ENCODE measurements at regions of chr5 and their contacts with region 1.

Region 1: DNA sequence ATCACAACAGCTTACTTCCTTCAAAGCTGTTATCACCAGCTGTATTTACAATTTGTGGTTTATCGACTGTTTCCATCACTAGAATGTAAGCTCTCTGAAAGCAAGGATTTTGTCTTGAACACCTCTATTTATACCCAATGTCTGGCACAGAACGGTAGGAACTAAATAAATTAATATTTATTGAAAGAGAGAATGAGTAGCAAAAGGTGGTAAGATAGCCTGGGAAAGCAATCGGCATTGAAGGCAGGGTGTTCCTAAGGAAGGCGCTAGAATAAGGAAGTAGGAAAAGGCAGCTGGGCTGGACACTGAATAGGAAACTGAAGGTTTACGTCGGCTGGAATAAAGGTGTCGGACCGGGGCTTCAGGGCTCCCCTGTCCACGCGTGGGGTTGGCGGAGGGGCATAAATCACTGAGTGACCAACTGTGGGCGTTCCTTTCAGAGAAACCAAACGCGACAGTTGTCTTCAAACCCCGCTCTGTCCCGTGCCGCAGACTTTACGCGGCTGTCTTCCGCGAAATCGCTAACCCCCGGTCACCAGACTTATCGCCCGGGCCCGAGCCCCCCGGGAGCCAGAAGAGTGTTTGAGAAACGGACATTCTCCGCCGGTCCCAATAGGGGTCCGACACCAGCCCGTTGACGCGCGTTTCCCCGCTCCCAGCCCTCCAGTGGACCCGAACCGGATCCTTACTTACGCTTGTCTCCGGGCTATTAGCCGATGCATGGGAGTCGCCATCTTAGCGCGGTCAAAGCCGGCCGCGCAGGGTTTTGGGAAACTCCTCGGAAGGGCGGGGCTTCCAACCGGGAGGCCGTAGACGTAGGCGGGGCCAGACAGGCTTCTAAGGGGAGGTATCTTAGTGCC is at the start of gene ZCCHC10:
- DNase-seq: peak; percentile 89
- H3K4me3 Mint-ChIP-seq: peak within 1 kb of the TSS; percentile 90
- H3K27ac Mint-ChIP-seq: peak within 1 kb of the TSS; percentile 93
- H3K4me1 Mint-ChIP-seq: peaks cover 23% of the 10 kb centered on the region
- H3K27me3 Mint-ChIP-seq: peaks cover 4% of the 10 kb centered on the region
- total RNA-seq, gene ZCCHC10: 37.6 and 41.7 TPM in 2 replicates

Region 2: DNA sequence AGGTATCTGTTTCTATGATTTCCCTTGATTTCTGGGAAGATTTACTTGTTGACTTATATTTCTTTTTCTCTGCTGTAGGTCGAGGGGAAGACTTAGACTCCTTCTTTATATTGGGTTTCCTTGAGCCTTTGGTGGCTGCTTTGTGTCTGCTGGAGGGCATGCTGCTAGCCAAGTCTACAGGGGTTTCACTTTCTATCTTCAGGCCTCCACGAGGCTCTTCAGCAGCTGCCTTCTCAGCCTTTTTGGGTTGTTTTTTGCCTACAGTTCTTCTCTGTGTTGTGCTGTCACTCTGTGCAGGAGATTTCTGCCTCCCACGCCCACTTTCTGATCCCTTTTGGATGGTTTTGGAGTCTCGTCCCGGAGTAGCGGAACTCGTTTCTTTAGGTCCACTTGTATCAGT is 129.3 kb before region 1 on chr5:
- intact Hi-C with region 1: loop called (anchors 10 kb)
- DNase-seq: no peak
- H3K4me3 Mint-ChIP-seq: no peak overlapping the region
- H3K27ac Mint-ChIP-seq: peak overlapping the region; percentile 83
- H3K4me1 Mint-ChIP-seq: peaks cover 22% of the 10 kb centered on the region
- H3K27me3 Mint-ChIP-seq: no peaks in the 10 kb centered on the region

Region 3: GRCh38 chr5:132947671-132948070 is 78.4 kb before region 1 on chr5:
- intact Hi-C with region 1: no loop called
- DNase-seq: no peak
- H3K4me3 Mint-ChIP-seq: no peak overlapping the region
- H3K27ac Mint-ChIP-seq: no peak overlapping the region
- H3K4me1 Mint-ChIP-seq: peaks cover 20% of the 10 kb centered on the region
- H3K27me3 Mint-ChIP-seq: no peaks in the 10 kb centered on the region

Region 4: GRCh38 chr5:132963175-132964104 is 62.6 kb before region 1 on chr5 and contains the start of gene AFF4:
- intact Hi-C with region 1: loop called (anchors 1 kb)
- DNase-seq: peak; percentile 85
- H3K4me3 Mint-ChIP-seq: peak within 1 kb of the TSS; percentile 93
- H3K27ac Mint-ChIP-seq: peak within 1 kb of the TSS; percentile 96
- H3K4me1 Mint-ChIP-seq: peaks cover 17% of the 10 kb centered on the region
- H3K27me3 Mint-ChIP-seq: peaks cover 3% of the 10 kb centered on the region
- total RNA-seq, gene AFF4: 38.3 and 40.9 TPM in 2 replicates

Region 5: GRCh38 chr5:133145436-133146170 is 119.6 kb after region 1 on chr5:
- intact Hi-C with region 1: no loop called
- DNase-seq: no peak
- H3K4me3 Mint-ChIP-seq: no peak overlapping the region
- H3K27ac Mint-ChIP-seq: no peak overlapping the region
- H3K4me1 Mint-ChIP-seq: peaks cover 15% of the 10 kb centered on the region
- H3K27me3 Mint-ChIP-seq: peaks cover 8% of the 10 kb centered on the region